ENCODE measurements at regions of chr17 and their contacts with region 1.

Region 1: DNA sequence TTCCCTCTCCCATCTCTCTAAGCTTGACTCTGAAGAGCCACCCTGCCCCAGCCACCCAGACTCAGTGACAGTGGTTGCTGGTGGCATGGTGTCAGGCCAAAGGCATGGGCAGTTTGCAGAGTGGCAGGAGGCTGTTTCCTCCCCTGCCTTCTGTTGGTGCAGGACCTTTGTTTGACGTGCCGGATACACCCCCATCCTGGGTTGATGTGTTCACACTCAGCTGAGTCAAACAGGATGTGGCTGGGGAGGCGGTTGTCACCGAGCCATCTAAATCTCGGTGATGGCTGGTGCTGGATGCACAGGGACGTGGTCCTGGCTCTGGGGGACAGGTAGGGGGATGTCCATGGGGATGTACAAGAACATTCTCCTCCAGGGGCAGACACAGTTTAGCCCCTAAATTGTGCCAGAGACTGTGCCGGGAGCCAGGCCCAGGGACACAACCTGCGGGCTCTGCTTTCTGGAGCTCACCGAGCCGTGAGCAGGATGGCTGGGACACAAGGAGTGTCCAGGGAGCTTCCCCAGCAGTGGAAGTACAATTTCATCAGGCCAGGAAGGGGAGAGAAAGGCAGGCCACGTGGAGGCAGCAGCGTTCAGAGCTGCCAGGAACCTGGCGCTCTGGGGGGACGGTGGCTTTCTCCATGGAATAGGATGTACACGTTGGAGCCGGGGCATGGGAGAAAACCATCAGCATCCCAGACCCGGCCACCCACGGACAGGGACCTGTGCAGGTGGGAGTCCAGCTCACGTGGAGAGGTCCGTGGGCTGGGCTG is 264.2 kb downstream of the SEC14L1 start:
- DNase-seq: peak; percentile 96
- ATAC-seq: peak; percentile 76
- H3K4me3 Mint-ChIP-seq: peak overlapping the region; percentile 87
- H3K27ac Mint-ChIP-seq: peak overlapping the region; percentile 92
- H3K4me1 Mint-ChIP-seq: peaks cover 93% of the 10 kb centered on the region
- H3K27me3 Mint-ChIP-seq: no peaks in the 10 kb centered on the region
- CTCF ChIP-seq: no peak

Region 2: GRCh38 chr17:77374170-77374936 is 30.6 kb before region 1 on chr17:
- CTCF ChIA-PET with region 1: interaction called, 35 read pairs
- POLR2A ChIA-PET with region 1: interaction called, 10 read pairs
- intact Hi-C with region 1: no loop called
- DNase-seq: peak; percentile 89
- ATAC-seq: peak; percentile 78
- H3K4me3 Mint-ChIP-seq: peak overlapping the region; percentile 92
- H3K27ac Mint-ChIP-seq: peak overlapping the region; percentile 91
- H3K4me1 Mint-ChIP-seq: peaks cover 56% of the 10 kb centered on the region
- H3K27me3 Mint-ChIP-seq: no peaks in the 10 kb centered on the region
- CTCF ChIP-seq: peak; percentile 31

Region 3: DNA sequence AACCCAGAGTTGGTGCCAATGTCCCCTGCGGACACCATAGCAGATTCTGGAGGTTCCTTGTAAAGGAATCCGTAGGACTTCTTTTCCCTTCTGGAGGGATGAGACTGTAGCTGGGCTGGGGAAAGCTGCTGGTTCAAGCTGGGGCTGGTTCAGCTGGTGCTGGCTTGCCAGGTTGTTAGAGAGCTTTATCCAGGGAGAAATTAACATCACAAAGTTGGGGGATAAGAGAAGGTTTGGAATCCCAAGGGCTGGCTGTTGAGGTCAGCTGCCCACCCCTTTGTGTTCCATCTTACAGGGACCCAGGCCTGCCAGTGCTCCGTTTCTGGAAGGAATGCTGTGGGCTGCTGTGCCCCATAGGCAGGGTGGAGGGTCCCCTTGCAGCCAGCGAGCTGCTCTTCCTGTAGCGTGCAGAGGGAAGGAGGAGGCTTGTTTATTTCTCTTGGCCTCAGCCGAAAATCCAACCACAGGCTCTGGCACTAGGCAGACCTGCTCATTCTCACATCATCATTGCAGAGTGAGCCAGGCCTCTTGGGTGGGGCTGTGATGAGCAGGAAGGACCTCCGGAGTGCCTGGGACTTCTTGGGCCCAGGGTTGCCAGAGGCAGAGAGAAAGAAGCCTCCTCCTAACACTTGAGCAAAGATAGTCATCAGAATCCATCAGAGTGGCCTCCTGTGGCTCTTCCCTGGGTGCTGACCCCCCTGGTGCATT is 13.2 kb before region 1 on chr17:
- CTCF ChIA-PET with region 1: interaction called, 64 read pairs
- POLR2A ChIA-PET with region 1: interaction called, 20 read pairs
- intact Hi-C with region 1: no loop called
- DNase-seq: peak; percentile 84
- ATAC-seq: peak; percentile 62
- H3K4me3 Mint-ChIP-seq: peak overlapping the region; percentile 81
- H3K27ac Mint-ChIP-seq: peak overlapping the region; percentile 85
- H3K4me1 Mint-ChIP-seq: peaks cover 68% of the 10 kb centered on the region
- H3K27me3 Mint-ChIP-seq: no peaks in the 10 kb centered on the region
- CTCF ChIP-seq: no peak

Region 4: DNA sequence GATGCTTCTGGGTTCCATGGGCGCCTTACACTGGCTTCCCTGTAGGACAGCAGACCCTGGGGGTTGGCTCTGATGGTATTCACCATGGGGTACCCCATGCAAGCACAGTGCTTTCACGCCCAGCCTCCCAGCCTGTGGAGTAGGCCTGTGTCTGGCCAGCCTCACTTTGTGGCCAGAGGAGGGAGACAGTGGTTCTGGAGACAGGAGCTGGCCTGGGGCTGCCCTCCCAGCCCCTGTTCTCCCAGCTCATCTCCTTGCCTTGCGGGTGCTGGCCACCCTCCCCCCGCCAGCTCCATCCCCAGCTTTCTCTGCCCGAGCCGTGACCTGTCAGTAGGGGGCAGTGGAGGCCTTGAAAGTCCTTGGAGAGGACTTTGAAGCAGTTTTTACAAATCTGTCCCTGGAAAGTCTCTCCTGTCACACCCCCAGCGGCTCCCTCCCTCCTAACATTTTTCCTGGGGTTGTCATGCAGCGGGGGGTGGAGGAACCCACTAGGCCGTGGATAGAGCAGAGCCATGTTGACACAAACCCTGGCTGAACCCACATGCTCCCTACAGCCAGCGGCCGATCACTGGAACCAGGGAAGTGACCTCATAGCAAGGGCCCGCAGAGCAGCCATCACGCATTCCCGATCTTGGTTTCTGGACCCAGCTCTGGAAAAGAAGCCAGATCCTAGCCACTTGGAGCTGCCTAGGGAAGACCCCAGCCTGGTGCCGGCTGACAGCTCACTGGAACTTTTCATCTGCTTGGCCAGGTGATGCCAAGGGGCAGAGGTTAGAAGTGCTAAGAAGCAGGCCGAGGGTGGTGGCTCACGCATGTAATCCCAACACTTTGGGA is 25.1 kb after region 1 on chr17:
- CTCF ChIA-PET with region 1: interaction called, 124 read pairs
- POLR2A ChIA-PET with region 1: interaction called, 31 read pairs
- intact Hi-C with region 1: no loop called
- DNase-seq: peak; percentile 89
- ATAC-seq: peak; percentile 34
- H3K4me3 Mint-ChIP-seq: no peak overlapping the region
- H3K27ac Mint-ChIP-seq: peak overlapping the region; percentile 91
- H3K4me1 Mint-ChIP-seq: peaks cover 83% of the 10 kb centered on the region
- H3K27me3 Mint-ChIP-seq: no peaks in the 10 kb centered on the region
- CTCF ChIP-seq: peak; percentile 89

Region 5: GRCh38 chr17:77444984-77445759 is 40.2 kb after region 1 on chr17:
- CTCF ChIA-PET with region 1: interaction called, 22 read pairs
- POLR2A ChIA-PET with region 1: interaction called, 9 read pairs
- intact Hi-C with region 1: loop called (anchors 5 kb)
- DNase-seq: peak; percentile 93
- ATAC-seq: peak; percentile 50
- H3K4me3 Mint-ChIP-seq: peak overlapping the region; percentile 77
- H3K27ac Mint-ChIP-seq: peak overlapping the region; percentile 94
- H3K4me1 Mint-ChIP-seq: peaks cover 91% of the 10 kb centered on the region
- H3K27me3 Mint-ChIP-seq: no peaks in the 10 kb centered on the region
- CTCF ChIP-seq: no peak

Region 6: GRCh38 chr17:77456951-77457548 is 52.1 kb after region 1 on chr17:
- CTCF ChIA-PET with region 1: interaction called, 24 read pairs
- POLR2A ChIA-PET with region 1: interaction called, 14 read pairs
- intact Hi-C with region 1: loop called (anchors 5 kb)
- DNase-seq: peak; percentile 70
- ATAC-seq: peak; percentile 5
- H3K4me3 Mint-ChIP-seq: peak overlapping the region; percentile 84
- H3K27ac Mint-ChIP-seq: peak overlapping the region; percentile 96
- H3K4me1 Mint-ChIP-seq: peaks cover 22% of the 10 kb centered on the region
- H3K27me3 Mint-ChIP-seq: no peaks in the 10 kb centered on the region
- CTCF ChIP-seq: peak; percentile 38

Region 7: DNA sequence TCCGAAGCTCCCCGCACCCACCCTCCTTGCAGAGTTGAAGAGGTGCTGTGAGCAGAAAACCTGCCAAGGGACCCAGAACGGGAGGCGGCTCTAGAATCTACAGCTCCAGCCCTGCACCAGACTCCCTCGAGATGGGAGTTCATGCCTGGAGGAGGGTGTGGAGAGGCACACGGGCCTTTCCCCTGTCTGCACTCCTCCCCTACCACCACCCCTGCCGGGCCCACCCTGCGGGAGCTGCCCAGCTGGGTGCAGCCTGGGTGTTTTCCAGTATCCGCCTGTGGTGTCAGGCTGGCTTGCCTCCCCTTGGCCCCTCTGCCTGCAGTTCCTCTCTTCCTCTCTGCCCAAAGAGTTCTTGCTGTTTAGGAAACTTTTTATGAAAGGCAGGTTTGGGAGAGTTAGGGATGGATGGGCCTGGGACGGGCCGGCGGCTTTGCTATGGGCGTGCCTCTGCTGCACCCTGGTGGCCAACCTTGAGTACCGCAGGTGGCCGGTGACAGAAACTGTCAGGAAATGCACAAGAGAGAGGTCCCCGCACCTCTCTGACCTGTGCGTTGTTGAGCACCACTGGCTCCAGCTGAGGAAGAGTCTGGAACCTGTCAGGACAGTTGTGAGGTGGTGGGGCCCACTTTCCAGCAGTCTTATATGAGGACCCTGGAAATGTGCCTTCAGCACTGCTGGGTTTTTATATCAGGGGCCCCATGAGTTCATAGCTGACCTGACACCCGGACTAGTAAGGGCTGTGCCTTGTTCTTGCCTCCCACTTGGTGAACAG is 89.9 kb after region 1 on chr17:
- CTCF ChIA-PET with region 1: interaction called, 42 read pairs
- POLR2A ChIA-PET with region 1: interaction called, 4 read pairs
- intact Hi-C with region 1: no loop called
- DNase-seq: peak; percentile 81
- ATAC-seq: peak; percentile 76
- H3K4me3 Mint-ChIP-seq: no peak overlapping the region
- H3K27ac Mint-ChIP-seq: peak overlapping the region; percentile 44
- H3K4me1 Mint-ChIP-seq: peaks cover 27% of the 10 kb centered on the region
- H3K27me3 Mint-ChIP-seq: no peaks in the 10 kb centered on the region
- CTCF ChIP-seq: peak; percentile 100

Region 8: DNA sequence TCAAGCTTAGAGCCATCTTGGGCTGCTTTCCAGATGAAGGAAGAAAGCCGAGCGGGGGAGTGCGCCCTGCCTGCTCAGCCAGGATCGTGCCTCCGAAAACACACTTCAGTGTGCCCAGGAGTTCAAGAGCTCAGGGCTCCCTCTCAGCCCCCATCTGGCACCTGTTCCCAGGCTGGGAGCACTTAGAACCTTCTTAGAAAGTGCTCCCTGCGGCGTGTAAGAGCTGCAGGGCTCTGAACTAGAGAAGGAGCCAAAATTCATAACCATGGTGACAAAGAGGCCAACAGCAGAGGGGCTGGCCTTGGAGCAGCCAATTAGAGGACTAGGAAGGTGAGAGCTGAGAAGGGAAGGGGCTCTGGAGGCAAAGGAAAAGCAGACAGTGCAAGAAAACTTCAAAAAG is 494.5 kb after region 1 on chr17:
- CTCF ChIA-PET with region 1: no interaction called
- POLR2A ChIA-PET with region 1: no interaction called
- intact Hi-C with region 1: no loop called
- DNase-seq: no peak
- ATAC-seq: no peak
- H3K4me3 Mint-ChIP-seq: no peak overlapping the region
- H3K27ac Mint-ChIP-seq: no peak overlapping the region
- H3K4me1 Mint-ChIP-seq: peaks cover 3% of the 10 kb centered on the region
- H3K27me3 Mint-ChIP-seq: no peaks in the 10 kb centered on the region
- CTCF ChIP-seq: no peak